ENCODE measurements at regions of chr11 and their contacts with region 1.

Region 1: GRCh38 chr11:57792060-57792541 is 30.5 kb downstream of the CTNND1 start:
- DNase-seq: peak; percentile 91
- CTCF ChIP-seq: no peak

Region 2: GRCh38 chr11:57741132-57742086 is 50.7 kb before region 1 on chr11 and contains the start of gene SELENOH:
- in situ Hi-C with region 1: loop called (anchors 10 kb)
- DNase-seq: peak; percentile 89
- CTCF ChIP-seq: no peak

Measured in GM13977 (cell line).